SK-N-SH (cell line): ENCODE measurements at regions of chr22 and their contacts with region 1.

Region 1: GRCh38 chr22:31970490-31971444 is 26.4 kb downstream of the YWHAH start:
- DNase-seq: peak; percentile 97
- H3K4me3 ChIP-seq: peak overlapping the region; percentile 53 to 70
- H3K27ac ChIP-seq: no peak overlapping the region
- H3K4me1 ChIP-seq: peaks cover 0 to 2% of the 10 kb centered on the region in 2 experiments; a peak in 1 of 4 replicates
- H3K27me3 ChIP-seq: no peaks in the 10 kb centered on the region
- CTCF ChIP-seq: peak; percentile 75
- EP300 ChIP-seq: no peak
- RAD21 ChIP-seq: peak; percentile 72

Region 2: DNA sequence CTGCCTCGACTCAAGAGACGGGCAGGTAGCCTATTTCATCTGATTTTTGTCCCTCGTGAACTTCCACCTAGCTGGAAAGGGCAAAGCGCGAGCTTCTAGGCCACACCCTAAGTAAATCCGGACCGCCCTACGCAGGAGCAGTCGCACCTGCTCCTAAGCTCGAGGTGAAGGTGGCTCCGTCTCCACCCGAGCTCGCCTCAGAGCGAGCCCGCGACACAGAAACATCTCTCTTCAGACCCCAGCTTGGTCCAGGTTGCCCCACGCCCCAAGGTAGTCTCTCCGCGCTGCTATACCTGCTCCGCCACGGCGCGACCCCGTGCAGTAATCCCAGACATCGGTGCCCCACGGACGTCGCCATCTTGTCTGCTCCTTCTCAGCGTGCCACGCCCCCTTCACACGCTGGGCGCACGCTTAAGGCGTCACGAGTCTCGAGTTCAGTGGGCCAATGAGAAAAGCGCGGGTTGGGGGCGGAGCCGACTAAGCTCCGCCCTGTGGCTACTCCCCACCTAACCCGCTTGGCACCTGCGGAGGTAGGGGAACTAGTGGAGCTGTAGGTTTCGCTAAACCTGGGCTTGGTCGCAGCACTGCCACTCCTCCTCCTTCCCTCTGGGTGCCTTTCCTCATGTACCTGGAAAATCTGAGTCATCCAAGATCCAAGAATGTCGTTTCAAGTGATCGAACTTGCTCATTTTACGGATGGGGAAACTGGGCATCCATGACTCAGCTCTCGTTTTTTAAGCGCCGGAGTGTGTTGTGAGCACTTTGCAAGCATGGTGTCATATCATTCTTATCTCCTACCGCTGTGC is 308.7 kb before region 1 on chr22 and contains the start of gene PISD:
- CTCF ChIA-PET with region 1: interaction called, 34 read pairs
- POLR2A ChIA-PET with region 1: interaction called, 3 read pairs
- DNase-seq: peak; percentile 96
- H3K4me3 ChIP-seq: peak within 1 kb of the TSS; percentile 83 to 93
- H3K27ac ChIP-seq: peak within 1 kb of the TSS; percentile 62 to 71; a peak in 3 of 4 replicates
- H3K4me1 ChIP-seq: peaks cover 5 to 9% of the 10 kb centered on the region in 2 experiments; a peak in 2 of 4 replicates
- H3K27me3 ChIP-seq: no peaks in the 10 kb centered on the region
- CTCF ChIP-seq: no peak
- EP300 ChIP-seq: no peak
- RAD21 ChIP-seq: no peak
- polyA plus RNA-seq, gene PISD: 34.9 and 41.4 TPM in 2 replicates

Region 3: DNA sequence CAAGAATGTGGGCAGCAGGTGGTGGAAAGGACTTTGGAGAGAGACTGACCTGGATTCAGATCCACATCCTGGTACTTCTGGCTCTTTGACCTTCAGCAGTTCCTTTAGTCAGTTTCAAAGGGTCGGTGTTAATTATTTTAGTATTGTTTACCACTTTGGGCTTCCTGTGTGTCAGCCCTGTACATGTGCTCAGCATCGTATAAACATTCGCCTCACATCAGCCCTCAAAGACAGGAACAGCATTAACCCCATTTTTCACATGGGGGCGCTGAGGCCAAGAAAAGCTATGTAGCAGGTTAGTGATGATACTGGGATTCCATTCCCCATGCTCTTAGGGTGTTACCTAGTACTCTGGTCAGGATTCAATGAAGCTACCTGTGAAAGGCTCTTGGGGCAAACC is 98.6 kb before region 1 on chr22:
- CTCF ChIA-PET with region 1: interaction called, 15 read pairs
- POLR2A ChIA-PET with region 1: no interaction called
- DNase-seq: peak; percentile 46
- H3K4me3 ChIP-seq: no peak overlapping the region
- H3K27ac ChIP-seq: no peak overlapping the region
- H3K4me1 ChIP-seq: peaks cover 0 to 6% of the 10 kb centered on the region in 2 experiments; a peak in 2 of 4 replicates
- H3K27me3 ChIP-seq: no peaks in the 10 kb centered on the region
- CTCF ChIP-seq: peak; percentile 23; the same call in 1 of the 2 replicates
- EP300 ChIP-seq: no peak
- RAD21 ChIP-seq: peak; percentile 66

Region 4: GRCh38 chr22:31952459-31952858 is 18.3 kb before region 1 on chr22:
- CTCF ChIA-PET with region 1: interaction called, 19 read pairs
- POLR2A ChIA-PET with region 1: interaction called, 4 read pairs
- DNase-seq: no peak
- H3K4me3 ChIP-seq: no peak overlapping the region
- H3K27ac ChIP-seq: peak overlapping the region in 1 of 2 experiments; percentile 77; a peak in 2 of 4 replicates
- H3K4me1 ChIP-seq: peaks cover 11 to 33% of the 10 kb centered on the region in 2 experiments; a peak in 3 of 4 replicates
- H3K27me3 ChIP-seq: no peaks in the 10 kb centered on the region
- CTCF ChIP-seq: no peak
- EP300 ChIP-seq: peak in 1 of 2 experiments; percentile 29; a peak in 1 of 4 replicates
- RAD21 ChIP-seq: no peak

Region 5: GRCh38 chr22:32063701-32064100 is 92.9 kb after region 1 on chr22:
- CTCF ChIA-PET with region 1: interaction called, 15 read pairs
- POLR2A ChIA-PET with region 1: no interaction called
- DNase-seq: no peak
- H3K4me3 ChIP-seq: no peak overlapping the region
- H3K27ac ChIP-seq: no peak overlapping the region
- H3K4me1 ChIP-seq: no peaks in the 10 kb centered on the region
- H3K27me3 ChIP-seq: no peaks in the 10 kb centered on the region; the same call in 1 of the 2 replicates
- CTCF ChIP-seq: no peak
- EP300 ChIP-seq: no peak
- RAD21 ChIP-seq: no peak